ENCODE measurements at regions of chr6 and their contacts with region 1.

Region 1: GRCh38 chr6:7328243-7328642 is 15.2 kb upstream of the SSR1 start:
- DNase-seq: no peak
- H3K4me3 ChIP-seq: no peak overlapping the region
- H3K27ac ChIP-seq: no peak overlapping the region
- H3K4me1 ChIP-seq: no peaks in the 10 kb centered on the region
- H3K27me3 ChIP-seq: peaks cover 0 to 5% of the 10 kb centered on the region in 2 donors
- CTCF ChIP-seq: no peak

Region 2: GRCh38 chr6:7129784-7130569 is 198.3 kb before region 1 on chr6:
- intact Hi-C with region 1: no loop called
- DNase-seq: peak in 1 of 2 donors; percentile 76
- H3K4me3 ChIP-seq: no peak overlapping the region
- H3K27ac ChIP-seq: no peak overlapping the region
- H3K4me1 ChIP-seq: peaks cover 0 to 18% (median 7%) of the 10 kb centered on the region in 4 donors
- H3K27me3 ChIP-seq: no peaks in the 10 kb centered on the region
- CTCF ChIP-seq: no peak

Region 3: GRCh38 chr6:8200255-8200654 is 872.0 kb after region 1 on chr6:
- intact Hi-C with region 1: loop called (anchors 5 kb)
- DNase-seq: no peak
- H3K4me3 ChIP-seq: no peak overlapping the region
- H3K27ac ChIP-seq: no peak overlapping the region
- H3K4me1 ChIP-seq: no peaks in the 10 kb centered on the region
- H3K27me3 ChIP-seq: no peaks in the 10 kb centered on the region
- CTCF ChIP-seq: no peak